HepG2 (cell line): ENCODE measurements at regions of chr10 and their contacts with region 1.

Region 1: GRCh38 chr10:57818522-57818921 is 449.2 kb downstream of the IPMK start:
- DNase-seq: no peak
- ATAC-seq: no peak
- H3K4me3 ChIP-seq: no peak overlapping the region
- H3K27ac ChIP-seq: no peak overlapping the region
- H3K4me1 ChIP-seq: no peaks in the 10 kb centered on the region
- H3K27me3 ChIP-seq: no peaks in the 10 kb centered on the region
- CTCF ChIP-seq: no peak
- EP300 ChIP-seq: no peak
- POLR2A ChIP-seq: no peak
- RAD21 ChIP-seq: no peak

Region 2: GRCh38 chr10:57202361-57202760 is 616.2 kb before region 1 on chr10:
- CTCF ChIA-PET with region 1: no interaction called
- POLR2A ChIA-PET with region 1: no interaction called
- in situ Hi-C with region 1: no loop called
- intact Hi-C with region 1: loop called (anchors 5 kb)
- DNase-seq: no peak
- ATAC-seq: no peak
- H3K4me3 ChIP-seq: no peak overlapping the region
- H3K27ac ChIP-seq: no peak overlapping the region
- H3K4me1 ChIP-seq: no peaks in the 10 kb centered on the region
- H3K27me3 ChIP-seq: no peaks in the 10 kb centered on the region
- CTCF ChIP-seq: no peak
- EP300 ChIP-seq: no peak
- POLR2A ChIP-seq: no peak
- RAD21 ChIP-seq: no peak